GM13976 (cell line): ENCODE measurements at regions of chr12 and their contacts with region 1.

Region 1: GRCh38 chr12:120437754-120438494 is at the start of gene COX6A1:
- DNase-seq: peak; percentile 97
- CTCF ChIP-seq: no peak

Region 2: GRCh38 chr12:120332041-120332440 is 105.9 kb before region 1 on chr12:
- in situ Hi-C with region 1: loop called (anchors 10 kb)
- DNase-seq: no peak
- CTCF ChIP-seq: no peak

Region 3: GRCh38 chr12:120677765-120678473 is 240.0 kb after region 1 on chr12:
- in situ Hi-C with region 1: no loop called
- DNase-seq: peak; percentile 70
- CTCF ChIP-seq: no peak